ENCODE measurements at regions of chr7 and their contacts with region 1.

Region 1: GRCh38 chr7:4973728-4974198 is 14.8 kb upstream of the MMD2 start:
- DNase-seq: peak; percentile 96
- H3K4me3 ChIP-seq: peak overlapping the region; percentile 66 to 95
- H3K27ac ChIP-seq: peak overlapping the region; percentile 79 to 86
- H3K4me1 ChIP-seq: no peaks in the 10 kb centered on the region; a peak in 2 of 4 replicates
- H3K27me3 ChIP-seq: no peaks in the 10 kb centered on the region
- CTCF ChIP-seq: peak; percentile 85
- EP300 ChIP-seq: no peak
- RAD21 ChIP-seq: peak; percentile 71

Region 2: GRCh38 chr7:4849369-4849768 is 124.4 kb before region 1 on chr7:
- CTCF ChIA-PET with region 1: interaction called, 13 read pairs
- POLR2A ChIA-PET with region 1: interaction called, 4 read pairs
- DNase-seq: peak; percentile 81
- H3K4me3 ChIP-seq: no peak overlapping the region
- H3K27ac ChIP-seq: peak overlapping the region in 1 of 2 experiments; percentile 5; a peak in 1 of 4 replicates
- H3K4me1 ChIP-seq: peaks cover 0 to 19% of the 10 kb centered on the region in 2 experiments; a peak in 2 of 4 replicates
- H3K27me3 ChIP-seq: no peaks in the 10 kb centered on the region
- CTCF ChIP-seq: peak; percentile 51
- EP300 ChIP-seq: peak in 1 of 2 experiments; percentile 45; a peak in 1 of 4 replicates
- RAD21 ChIP-seq: peak; percentile 95

Region 3: GRCh38 chr7:4943297-4943696 is 30.5 kb before region 1 on chr7:
- CTCF ChIA-PET with region 1: interaction called, 10 read pairs
- POLR2A ChIA-PET with region 1: no interaction called
- DNase-seq: no peak
- H3K4me3 ChIP-seq: no peak overlapping the region
- H3K27ac ChIP-seq: no peak overlapping the region
- H3K4me1 ChIP-seq: no peaks in the 10 kb centered on the region
- H3K27me3 ChIP-seq: peaks cover 7% of the 10 kb centered on the region; the same call in 1 of the 2 replicates
- CTCF ChIP-seq: no peak
- EP300 ChIP-seq: no peak
- RAD21 ChIP-seq: no peak

Region 4: DNA sequence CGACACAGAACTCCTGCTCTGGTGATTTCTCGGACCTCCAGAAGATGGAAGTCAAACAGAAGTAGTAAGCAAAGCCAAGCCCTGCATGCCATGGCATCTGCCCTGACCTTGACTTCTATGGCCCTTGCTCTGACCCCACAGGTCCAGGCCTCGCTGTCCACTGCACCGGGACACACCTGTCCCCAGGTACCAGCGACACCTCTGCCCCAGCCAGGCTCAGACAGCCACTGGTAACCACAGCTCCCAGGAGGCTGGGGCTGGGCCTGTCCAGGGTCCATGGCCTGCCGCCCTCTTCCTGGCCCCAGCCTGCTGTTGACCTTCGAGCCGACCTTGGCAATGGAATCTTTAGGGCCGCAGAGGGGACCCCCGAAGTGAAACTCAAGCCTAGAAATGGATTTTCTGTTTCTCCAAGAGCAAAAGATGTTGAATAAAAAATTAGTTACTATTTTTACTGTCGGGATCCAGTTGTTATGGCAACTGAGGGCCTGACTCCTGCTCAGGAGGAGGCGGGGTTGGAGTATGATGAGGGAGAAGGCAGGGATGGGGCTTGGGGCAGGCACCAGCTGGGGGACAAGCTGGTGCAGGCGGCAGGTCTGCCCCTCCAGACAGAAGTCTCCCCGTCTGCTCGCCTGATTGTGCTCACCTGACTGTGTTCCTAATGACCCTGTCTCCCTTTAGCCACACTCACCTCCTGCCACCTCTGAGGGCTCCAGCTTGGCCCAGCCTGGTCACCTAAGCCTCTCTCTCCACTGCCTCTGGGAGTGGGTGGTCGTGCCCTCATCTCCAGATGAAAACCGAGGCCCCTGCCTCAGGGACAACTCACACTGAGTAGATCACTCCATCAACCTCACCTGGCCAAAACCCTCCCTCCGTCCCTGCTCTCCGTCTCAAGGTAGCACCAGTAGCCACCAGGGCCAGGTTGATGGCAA is 10.6 kb before region 1 on chr7:
- CTCF ChIA-PET with region 1: interaction called, 28 read pairs
- POLR2A ChIA-PET with region 1: no interaction called
- DNase-seq: no peak
- H3K4me3 ChIP-seq: no peak overlapping the region
- H3K27ac ChIP-seq: no peak overlapping the region
- H3K4me1 ChIP-seq: no peaks in the 10 kb centered on the region; a peak in 1 of 4 replicates
- H3K27me3 ChIP-seq: peaks cover 31% of the 10 kb centered on the region
- CTCF ChIP-seq: no peak
- EP300 ChIP-seq: no peak
- RAD21 ChIP-seq: no peak

Region 5: GRCh38 chr7:5083311-5083711 is 109.5 kb after region 1 on chr7:
- CTCF ChIA-PET with region 1: interaction called, 72 read pairs
- POLR2A ChIA-PET with region 1: no interaction called
- DNase-seq: peak; percentile 63
- H3K4me3 ChIP-seq: peak overlapping the region; percentile 9 to 35; a peak in 2 of 4 replicates
- H3K27ac ChIP-seq: no peak overlapping the region
- H3K4me1 ChIP-seq: peaks cover 0 to 10% of the 10 kb centered on the region in 2 experiments; a peak in 1 of 4 replicates
- H3K27me3 ChIP-seq: peaks cover 36% of the 10 kb centered on the region
- CTCF ChIP-seq: no peak
- EP300 ChIP-seq: no peak
- RAD21 ChIP-seq: peak; percentile 2; the same call in 1 of the 2 replicates

Measured in SK-N-SH (cell line).